GM10248 (cell line): ENCODE measurements at regions of chr7 and their contacts with region 1.

Region 1: GRCh38 chr7:152073352-152073751 is 47.9 kb downstream of the GALNT11 start:
- DNase-seq: no peak
- CTCF ChIP-seq: no peak

Region 2: GRCh38 chr7:152292898-152293297 is 219.5 kb after region 1 on chr7:
- CTCF ChIA-PET with region 1: no interaction called
- POLR2A ChIA-PET with region 1: interaction called, 10 read pairs
- DNase-seq: no peak
- CTCF ChIP-seq: no peak